Caco-2 (cell line): ENCODE measurements at regions of chr11 and their contacts with region 1.

Region 1: DNA sequence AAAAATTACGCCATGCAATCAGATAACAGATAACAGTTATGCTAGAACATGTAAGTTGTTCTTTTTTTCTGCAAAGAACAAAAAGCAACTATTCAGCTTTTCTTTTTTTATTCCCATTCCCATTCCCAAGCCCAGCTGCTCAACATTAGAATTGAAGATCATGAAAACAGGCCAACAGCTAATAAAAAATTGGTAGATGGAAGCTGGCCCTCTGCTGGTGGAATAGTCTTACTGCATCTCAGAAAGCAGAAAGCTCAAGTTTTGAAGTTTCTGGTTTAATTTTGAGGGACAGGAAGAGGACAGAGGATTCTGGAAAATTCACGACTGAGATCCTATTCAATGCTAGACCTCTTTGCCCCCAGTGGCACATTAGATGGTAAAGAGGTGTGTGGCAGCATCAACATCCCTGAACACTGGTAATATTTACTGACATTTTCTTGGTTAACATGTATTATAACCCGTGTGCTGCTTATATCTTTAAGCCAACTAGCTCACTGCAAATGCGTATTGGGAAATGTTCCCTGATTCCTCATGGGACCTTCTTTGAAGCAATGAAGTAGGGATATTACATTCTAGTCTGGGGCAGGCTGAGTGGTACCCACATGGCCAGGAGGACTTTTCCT is 591.2 kb downstream of the OPCML start:
- DNase-seq: peak in 1 of 2 experiments; percentile 49
- H3K4me3 ChIP-seq: no peak overlapping the region
- H3K4me3 Mint-ChIP-seq: no peak overlapping the region
- H3K27ac Mint-ChIP-seq: no peak overlapping the region
- H3K4me1 ChIP-seq: no peaks in the 10 kb centered on the region
- H3K4me1 Mint-ChIP-seq: no peaks in the 10 kb centered on the region
- H3K27me3 ChIP-seq: no peaks in the 10 kb centered on the region
- H3K27me3 Mint-ChIP-seq: peaks cover 3% of the 10 kb centered on the region
- CTCF ChIP-seq: peak; percentile 85 to 97

Region 2: GRCh38 chr11:132278801-132279574 is 662.1 kb before region 1 on chr11:
- CTCF ChIA-PET with region 1: no interaction called
- POLR2A ChIA-PET with region 1: no interaction called
- intact Hi-C with region 1: loop called (anchors 2 kb)
- DNase-seq: peak in 1 of 2 experiments; percentile 38
- H3K4me3 ChIP-seq: no peak overlapping the region
- H3K4me3 Mint-ChIP-seq: no peak overlapping the region
- H3K27ac Mint-ChIP-seq: no peak overlapping the region
- H3K4me1 ChIP-seq: no peaks in the 10 kb centered on the region
- H3K4me1 Mint-ChIP-seq: no peaks in the 10 kb centered on the region
- H3K27me3 ChIP-seq: no peaks in the 10 kb centered on the region
- H3K27me3 Mint-ChIP-seq: no peaks in the 10 kb centered on the region
- CTCF ChIP-seq: peak in 1 of 2 experiments; percentile 62

Region 3: GRCh38 chr11:133064152-133064877 is 123.2 kb after region 1 on chr11:
- CTCF ChIA-PET with region 1: no interaction called
- POLR2A ChIA-PET with region 1: no interaction called
- intact Hi-C with region 1: loop called (anchors 1 kb)
- DNase-seq: peak; percentile 67 to 72
- H3K4me3 ChIP-seq: no peak overlapping the region
- H3K4me3 Mint-ChIP-seq: peak overlapping the region; percentile 12
- H3K27ac Mint-ChIP-seq: no peak overlapping the region
- H3K4me1 ChIP-seq: no peaks in the 10 kb centered on the region
- H3K4me1 Mint-ChIP-seq: no peaks in the 10 kb centered on the region
- H3K27me3 ChIP-seq: no peaks in the 10 kb centered on the region
- H3K27me3 Mint-ChIP-seq: peaks cover 15% of the 10 kb centered on the region
- CTCF ChIP-seq: peak; percentile 55 to 69